Activated CD8-positive, alpha-beta T cell treated with anti-CD3 and anti-CD28 coated beads, Interleukin-2, amount 10 ng/mL, durations not matched to agents 7 days and 5 days (primary cell): ENCODE measurements at regions of chr21 and their contacts with region 1.

Region 1: GRCh38 chr21:25607151-25608043 is at the start of gene MRPL39:
- DNase-seq: peak; percentile 92
- ATAC-seq: peak; percentile 96
- H3K4me3 Mint-ChIP-seq: peak within 1 kb of the TSS; percentile 100
- H3K27ac Mint-ChIP-seq: peak within 1 kb of the TSS; percentile 99
- H3K4me1 Mint-ChIP-seq: peaks cover 36% of the 10 kb centered on the region
- H3K27me3 Mint-ChIP-seq: no peaks in the 10 kb centered on the region
- total RNA-seq, gene MRPL39: 42.7 to 44.5 TPM

Region 2: GRCh38 chr21:25254491-25255174 is 352.8 kb before region 1 on chr21:
- CTCF ChIA-PET with region 1: no interaction called
- POLR2A ChIA-PET with region 1: no interaction called
- DNase-seq: no peak
- ATAC-seq: no peak
- H3K4me3 Mint-ChIP-seq: no peak overlapping the region
- H3K27ac Mint-ChIP-seq: no peak overlapping the region
- H3K4me1 Mint-ChIP-seq: no peaks in the 10 kb centered on the region
- H3K27me3 Mint-ChIP-seq: no peaks in the 10 kb centered on the region

Region 3: GRCh38 chr21:25421327-25422028 is 185.9 kb before region 1 on chr21:
- CTCF ChIA-PET with region 1: interaction called, 19 read pairs
- POLR2A ChIA-PET with region 1: interaction called, 5 read pairs
- DNase-seq: peak; percentile 79
- ATAC-seq: peak; percentile 98
- H3K4me3 Mint-ChIP-seq: peak overlapping the region; percentile 66
- H3K27ac Mint-ChIP-seq: peak overlapping the region; percentile 88
- H3K4me1 Mint-ChIP-seq: peaks cover 27% of the 10 kb centered on the region
- H3K27me3 Mint-ChIP-seq: no peaks in the 10 kb centered on the region

Region 4: GRCh38 chr21:25573409-25574206 is 33.8 kb before region 1 on chr21:
- CTCF ChIA-PET with region 1: interaction called, 18 read pairs
- POLR2A ChIA-PET with region 1: interaction called, 4 read pairs
- DNase-seq: peak; percentile 45
- ATAC-seq: peak; percentile 68
- H3K4me3 Mint-ChIP-seq: peak overlapping the region; percentile 75
- H3K27ac Mint-ChIP-seq: peak overlapping the region; percentile 88
- H3K4me1 Mint-ChIP-seq: peaks cover 76% of the 10 kb centered on the region
- H3K27me3 Mint-ChIP-seq: no peaks in the 10 kb centered on the region

Region 5: DNA sequence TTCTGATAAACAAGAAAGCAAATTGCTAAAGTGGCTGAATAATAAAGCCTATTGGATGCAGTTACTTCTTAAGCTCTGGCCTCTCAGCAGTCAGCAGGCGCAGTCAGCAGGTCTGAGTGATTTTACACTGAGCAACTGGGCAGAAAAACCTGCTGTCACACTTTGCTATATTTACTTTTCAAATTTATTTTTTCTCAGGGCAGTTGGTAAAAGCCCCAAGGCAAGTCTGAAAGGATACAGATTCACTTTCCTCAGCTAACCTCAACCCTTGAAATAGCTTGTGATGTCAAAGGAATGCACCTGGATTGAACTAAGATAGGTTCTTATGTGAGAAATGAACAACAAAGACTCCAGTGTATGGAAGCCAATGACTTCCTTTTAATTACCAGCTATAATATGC is 93.3 kb after region 1 on chr21:
- CTCF ChIA-PET with region 1: interaction called, 10 read pairs
- POLR2A ChIA-PET with region 1: no interaction called
- DNase-seq: no peak
- ATAC-seq: no peak
- H3K4me3 Mint-ChIP-seq: no peak overlapping the region
- H3K27ac Mint-ChIP-seq: no peak overlapping the region
- H3K4me1 Mint-ChIP-seq: no peaks in the 10 kb centered on the region
- H3K27me3 Mint-ChIP-seq: no peaks in the 10 kb centered on the region

Region 6: DNA sequence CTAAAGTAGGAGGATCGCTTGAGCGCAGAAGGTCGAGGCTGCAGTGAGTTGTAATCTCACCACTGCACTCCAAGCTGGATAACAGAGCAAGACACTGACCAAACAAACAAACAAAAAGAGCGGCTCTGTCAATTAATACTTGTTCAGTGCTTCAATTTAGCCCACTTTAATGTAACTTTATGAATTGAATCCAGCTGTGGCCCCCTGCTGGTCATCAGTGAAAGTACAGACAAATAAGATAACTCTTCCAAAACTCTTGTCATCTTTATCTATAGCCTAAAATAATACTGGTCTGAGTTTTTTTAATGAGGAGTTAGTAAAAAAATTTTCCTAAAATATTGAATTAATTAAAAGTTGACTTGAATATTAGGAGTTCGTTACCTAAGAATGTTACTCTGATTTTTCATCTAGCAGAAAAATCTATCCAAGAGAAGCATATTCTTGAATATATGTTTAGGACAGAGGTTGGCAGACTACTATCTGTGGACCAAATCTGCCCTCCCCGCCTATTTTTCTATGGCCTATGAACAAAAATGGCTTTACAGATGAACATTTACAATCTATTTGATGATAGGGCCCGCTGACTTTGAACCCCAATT is 101.2 kb after region 1 on chr21:
- CTCF ChIA-PET with region 1: interaction called, 34 read pairs
- POLR2A ChIA-PET with region 1: no interaction called
- DNase-seq: peak; percentile 63
- ATAC-seq: no peak
- H3K4me3 Mint-ChIP-seq: no peak overlapping the region
- H3K27ac Mint-ChIP-seq: no peak overlapping the region
- H3K4me1 Mint-ChIP-seq: no peaks in the 10 kb centered on the region
- H3K27me3 Mint-ChIP-seq: no peaks in the 10 kb centered on the region

Region 7: DNA sequence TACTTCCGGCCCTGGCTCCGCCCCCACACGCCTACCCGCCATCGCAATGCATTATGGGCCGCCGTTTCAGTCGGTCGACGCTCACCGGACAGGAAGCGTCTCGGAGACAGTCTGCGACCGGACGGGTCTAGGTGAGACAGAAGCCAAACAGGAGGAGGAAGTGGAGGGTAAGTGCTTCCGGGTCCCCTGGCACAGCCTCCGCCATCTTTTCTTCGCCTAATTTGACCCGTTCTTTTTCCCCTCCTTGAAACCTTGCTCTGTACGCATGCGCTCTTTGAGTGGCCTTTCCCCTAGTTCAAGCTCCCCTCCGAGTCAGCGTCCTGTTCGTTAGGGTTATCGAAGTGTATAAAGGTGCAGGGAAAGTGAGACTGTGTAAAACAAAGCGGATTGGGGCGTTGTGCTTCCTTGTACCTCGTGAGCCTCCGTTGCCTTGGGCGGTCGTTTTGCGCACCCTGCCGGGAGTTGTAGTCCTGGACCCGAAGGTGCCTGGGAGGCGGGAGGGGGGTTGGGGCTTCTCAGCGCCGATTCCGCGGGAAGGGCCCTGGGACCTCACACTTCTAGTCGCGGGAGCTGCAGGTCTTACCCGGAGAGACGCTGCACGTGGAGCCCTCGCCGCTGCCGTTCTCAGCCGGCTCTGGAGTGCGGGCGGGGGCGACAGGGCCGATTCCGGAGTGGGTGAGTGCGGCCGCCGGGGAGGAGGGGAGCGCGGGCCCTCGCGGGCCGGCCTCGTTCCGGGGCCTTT is 127.7 kb after region 1 on chr21 and contains the starts of genes ATP5PF and GABPA:
- CTCF ChIA-PET with region 1: interaction called, 6 read pairs
- POLR2A ChIA-PET with region 1: interaction called, 14 read pairs
- DNase-seq: peak; percentile 98
- ATAC-seq: peak; percentile 93
- H3K4me3 Mint-ChIP-seq: peak within 1 kb of the TSS; percentile 99
- H3K27ac Mint-ChIP-seq: peak within 1 kb of the TSS; percentile 100
- H3K4me1 Mint-ChIP-seq: peaks cover 29% of the 10 kb centered on the region
- H3K27me3 Mint-ChIP-seq: no peaks in the 10 kb centered on the region
- total RNA-seq, gene ATP5PF: 148 to 150 TPM
- total RNA-seq, gene GABPA: 21.3 to 26.9 TPM

Region 8: DNA sequence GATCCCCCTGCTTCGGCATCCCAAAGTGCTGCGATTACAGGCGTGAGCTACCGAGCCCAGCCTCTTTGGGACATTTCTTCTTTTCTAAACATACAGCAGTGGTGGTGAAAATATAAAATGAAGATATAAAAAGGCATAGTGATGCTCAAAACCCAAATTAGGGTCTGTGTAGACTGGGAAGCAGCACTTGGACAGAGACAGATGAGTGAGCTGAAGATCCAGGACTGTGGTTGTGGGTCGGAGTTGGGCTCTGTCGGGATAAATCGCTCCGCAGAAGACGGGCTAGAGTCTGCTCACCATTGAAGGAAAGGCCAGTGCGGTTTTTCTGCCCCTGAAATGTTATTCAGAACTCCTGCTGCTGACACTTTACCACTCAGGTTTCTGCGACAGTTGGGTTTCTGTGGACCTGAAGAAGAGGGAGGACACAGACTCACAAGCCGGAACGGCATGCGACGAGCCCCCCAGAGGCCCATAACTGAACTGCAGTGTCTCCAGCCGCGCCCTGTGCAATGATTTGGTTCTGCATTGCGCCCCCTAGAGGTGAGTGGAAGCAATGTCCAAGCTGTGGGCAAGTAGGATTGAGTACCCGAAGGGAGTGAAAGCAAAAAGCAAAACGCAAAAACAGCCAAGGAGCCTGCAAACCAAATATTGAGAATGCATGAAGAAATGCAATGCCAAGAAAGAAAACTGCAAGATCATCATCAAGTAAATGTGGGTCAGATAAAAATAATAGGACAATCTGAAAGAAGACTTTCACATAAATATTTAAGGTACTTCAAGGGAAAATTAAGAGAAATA is 194.0 kb after region 1 on chr21:
- CTCF ChIA-PET with region 1: interaction called, 46 read pairs
- POLR2A ChIA-PET with region 1: no interaction called
- DNase-seq: peak; percentile 93
- ATAC-seq: peak; percentile 100
- H3K4me3 Mint-ChIP-seq: peak overlapping the region; percentile 22
- H3K27ac Mint-ChIP-seq: no peak overlapping the region
- H3K4me1 Mint-ChIP-seq: peaks cover 7% of the 10 kb centered on the region
- H3K27me3 Mint-ChIP-seq: peaks cover 26% of the 10 kb centered on the region